ENCODE measurements at regions of chr6 and their contacts with region 1.

Region 1: DNA sequence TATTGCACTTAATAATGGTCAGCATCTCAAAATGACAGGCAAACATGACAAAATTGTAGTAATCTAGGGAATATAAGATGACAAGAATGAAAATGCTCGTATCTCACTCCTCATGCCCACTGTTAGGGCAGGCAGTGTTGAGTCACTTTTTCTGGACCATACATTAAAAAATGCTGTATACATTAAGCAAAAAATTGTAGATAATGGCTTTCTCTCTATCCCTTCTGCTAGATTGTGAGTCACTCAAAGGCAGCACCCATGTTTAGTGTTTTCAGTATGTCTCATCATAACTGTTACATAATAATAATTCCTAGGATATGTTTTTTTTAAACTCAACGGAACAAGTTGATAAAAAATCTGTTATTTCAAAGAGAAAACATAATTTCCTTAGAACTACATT is 199.3 kb downstream of the TENT5A start:
- DNase-seq: no peak
- H3K4me3 ChIP-seq: no peak overlapping the region
- H3K27ac ChIP-seq: no peak overlapping the region
- H3K4me1 ChIP-seq: no peaks in the 10 kb centered on the region
- CTCF ChIP-seq: no peak

Region 2: GRCh38 chr6:81446499-81446898 is 106.7 kb before region 1 on chr6:
- CTCF ChIA-PET with region 1: no interaction called
- POLR2A ChIA-PET with region 1: interaction called, 16 read pairs
- intact Hi-C with region 1: no loop called
- DNase-seq: no peak
- H3K4me3 ChIP-seq: no peak overlapping the region
- H3K27ac ChIP-seq: no peak overlapping the region
- H3K4me1 ChIP-seq: no peaks in the 10 kb centered on the region
- CTCF ChIP-seq: no peak